Caco-2 (cell line): ENCODE measurements at regions of chr5 and their contacts with region 1.

Region 1: GRCh38 chr5:135332519-135333150 is 66.4 kb downstream of the MACROH2A1 start:
- DNase-seq: peak in 1 of 2 experiments; percentile 71
- H3K4me3 ChIP-seq: no peak overlapping the region
- H3K4me3 Mint-ChIP-seq: no peak overlapping the region
- H3K27ac Mint-ChIP-seq: no peak overlapping the region
- H3K4me1 ChIP-seq: peaks cover 23% of the 10 kb centered on the region
- H3K4me1 Mint-ChIP-seq: peaks cover 22% of the 10 kb centered on the region
- H3K27me3 ChIP-seq: no peaks in the 10 kb centered on the region
- H3K27me3 Mint-ChIP-seq: no peaks in the 10 kb centered on the region
- CTCF ChIP-seq: peak; percentile 60 to 63

Region 2: DNA sequence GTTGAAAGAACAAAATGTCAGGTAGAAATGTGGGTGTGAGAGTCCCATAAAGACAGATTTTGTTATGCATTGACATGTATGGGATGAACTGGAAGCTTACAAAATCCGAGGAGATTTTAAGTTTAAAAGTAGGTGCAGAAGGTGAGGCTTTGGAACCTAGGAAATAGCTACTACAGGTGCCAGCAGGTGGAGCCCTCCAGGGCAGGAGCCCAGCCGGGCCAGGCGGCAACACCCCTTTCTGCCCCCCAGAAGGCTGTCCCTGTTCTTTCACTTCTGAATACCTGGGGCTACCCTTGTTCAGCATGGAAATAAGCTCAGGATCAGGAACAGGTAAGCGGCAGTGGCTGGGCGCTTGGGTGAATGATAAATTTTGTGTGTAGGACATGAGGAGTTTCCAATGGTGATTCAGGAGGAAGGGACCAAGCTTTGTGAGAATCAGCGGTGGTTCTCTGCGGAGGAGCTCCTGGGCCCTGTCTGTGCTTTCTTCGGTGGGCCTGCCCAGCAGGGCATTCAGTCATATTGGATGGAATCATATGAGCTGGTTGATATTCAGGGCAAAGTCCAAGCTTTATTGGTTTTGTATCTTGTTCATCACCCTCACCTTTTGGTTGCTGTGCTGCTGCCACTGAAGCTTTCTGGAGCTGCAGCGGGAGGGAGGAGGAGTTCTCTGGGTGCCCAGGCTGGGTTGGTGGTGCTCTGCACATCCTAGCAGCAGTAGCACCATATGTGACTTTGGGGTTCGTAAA is 415.4 kb before region 1 on chr5:
- CTCF ChIA-PET with region 1: no interaction called
- POLR2A ChIA-PET with region 1: no interaction called
- intact Hi-C with region 1: loop called (anchors 2 kb)
- DNase-seq: peak in 1 of 2 experiments; percentile 44
- H3K4me3 ChIP-seq: no peak overlapping the region
- H3K4me3 Mint-ChIP-seq: no peak overlapping the region
- H3K27ac Mint-ChIP-seq: no peak overlapping the region
- H3K4me1 ChIP-seq: no peaks in the 10 kb centered on the region
- H3K4me1 Mint-ChIP-seq: peaks cover 11% of the 10 kb centered on the region
- H3K27me3 ChIP-seq: no peaks in the 10 kb centered on the region
- H3K27me3 Mint-ChIP-seq: no peaks in the 10 kb centered on the region
- CTCF ChIP-seq: peak; percentile 38 to 72

Region 3: DNA sequence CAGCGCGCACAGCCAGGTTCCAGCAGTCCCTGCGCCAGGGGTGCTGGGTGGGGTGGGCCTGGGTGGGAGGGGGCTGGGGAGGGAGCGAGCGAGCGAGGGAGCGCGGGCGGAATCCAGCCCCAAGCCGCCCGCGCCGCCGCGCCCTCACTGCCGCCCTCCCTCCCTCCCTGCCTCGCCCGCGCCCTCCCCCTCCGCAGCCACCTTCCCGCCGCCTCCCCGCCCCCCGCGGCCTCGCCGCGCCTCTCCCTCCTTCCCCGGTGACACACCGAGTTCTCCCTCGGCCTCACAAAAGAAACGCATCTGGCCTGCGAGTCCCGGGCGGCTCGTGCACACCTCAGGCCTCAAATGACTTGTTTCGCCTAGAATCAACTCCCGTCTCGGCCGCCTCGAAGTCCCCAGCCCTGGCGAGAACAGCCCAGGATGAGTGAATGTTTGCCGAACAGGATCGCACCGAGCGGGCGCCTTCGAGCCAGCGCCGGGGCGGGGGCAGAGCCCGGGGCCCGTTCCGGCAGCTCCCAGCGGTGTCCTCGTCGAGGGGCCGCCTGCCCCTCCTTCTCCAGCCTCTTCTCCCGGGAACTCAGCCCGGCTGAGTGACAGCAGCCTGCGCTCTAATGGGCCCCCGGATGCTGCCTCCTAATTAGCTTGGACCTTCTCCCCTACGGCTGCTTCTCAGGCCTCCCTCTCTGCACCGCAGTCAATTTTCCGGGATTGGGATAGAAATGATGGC is 298.2 kb before region 1 on chr5:
- CTCF ChIA-PET with region 1: no interaction called
- POLR2A ChIA-PET with region 1: no interaction called
- intact Hi-C with region 1: loop called (anchors 5 kb)
- DNase-seq: peak; percentile 88 to 89
- H3K4me3 ChIP-seq: peak overlapping the region; percentile 83
- H3K4me3 Mint-ChIP-seq: peak overlapping the region; percentile 89
- H3K27ac Mint-ChIP-seq: peak overlapping the region; percentile 81
- H3K4me1 ChIP-seq: peaks cover 27% of the 10 kb centered on the region
- H3K4me1 Mint-ChIP-seq: peaks cover 31% of the 10 kb centered on the region
- H3K27me3 ChIP-seq: no peaks in the 10 kb centered on the region
- H3K27me3 Mint-ChIP-seq: no peaks in the 10 kb centered on the region
- CTCF ChIP-seq: no peak

Region 4: GRCh38 chr5:135203593-135204036 is 129.0 kb before region 1 on chr5:
- CTCF ChIA-PET with region 1: no interaction called
- POLR2A ChIA-PET with region 1: no interaction called
- intact Hi-C with region 1: loop called (anchors 1 kb)
- DNase-seq: no peak
- H3K4me3 ChIP-seq: no peak overlapping the region
- H3K4me3 Mint-ChIP-seq: no peak overlapping the region
- H3K27ac Mint-ChIP-seq: no peak overlapping the region
- H3K4me1 ChIP-seq: no peaks in the 10 kb centered on the region
- H3K4me1 Mint-ChIP-seq: no peaks in the 10 kb centered on the region
- H3K27me3 ChIP-seq: no peaks in the 10 kb centered on the region
- H3K27me3 Mint-ChIP-seq: no peaks in the 10 kb centered on the region
- CTCF ChIP-seq: peak; percentile 28 to 29

Region 5: DNA sequence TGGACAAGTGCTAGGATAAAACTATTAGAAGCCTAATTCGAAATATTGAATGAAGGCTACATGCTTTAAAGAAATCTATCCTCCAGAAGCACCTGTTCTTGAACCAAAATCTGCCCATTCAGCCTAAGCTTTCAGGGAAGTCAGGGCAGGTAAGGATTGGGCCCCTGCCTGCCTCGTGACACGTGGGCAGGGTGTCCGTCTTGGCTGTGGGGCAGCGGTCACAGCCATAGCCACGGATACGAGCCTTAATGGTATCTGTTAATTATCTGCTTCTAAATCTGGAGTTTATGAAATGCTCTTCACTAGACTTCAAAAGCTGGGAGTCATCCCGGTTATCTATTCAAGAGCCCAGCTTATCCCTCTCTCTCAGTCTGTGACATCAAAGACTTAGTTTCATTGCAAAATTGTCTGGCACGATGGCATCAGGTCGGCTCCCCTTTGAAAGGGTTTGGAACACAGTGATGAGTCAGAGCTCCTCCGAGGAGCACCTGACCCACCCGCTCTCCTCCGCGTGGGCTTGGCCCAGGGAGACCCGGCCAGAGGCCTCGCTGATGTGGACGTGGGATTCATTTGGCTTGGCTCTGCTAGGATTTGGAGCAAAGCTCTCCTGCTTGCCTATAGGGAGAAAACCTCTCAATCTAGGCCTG is 69.5 kb before region 1 on chr5:
- CTCF ChIA-PET with region 1: no interaction called
- POLR2A ChIA-PET with region 1: no interaction called
- intact Hi-C with region 1: loop called (anchors 2 kb)
- DNase-seq: peak; percentile 87 to 90
- H3K4me3 ChIP-seq: no peak overlapping the region
- H3K4me3 Mint-ChIP-seq: peak overlapping the region; percentile 46
- H3K27ac Mint-ChIP-seq: peak overlapping the region; percentile 56
- H3K4me1 ChIP-seq: peaks cover 36% of the 10 kb centered on the region
- H3K4me1 Mint-ChIP-seq: peaks cover 28% of the 10 kb centered on the region
- H3K27me3 ChIP-seq: no peaks in the 10 kb centered on the region
- H3K27me3 Mint-ChIP-seq: no peaks in the 10 kb centered on the region
- CTCF ChIP-seq: no peak

Region 6: GRCh38 chr5:135313946-135314345 is 18.7 kb before region 1 on chr5:
- CTCF ChIA-PET with region 1: no interaction called
- POLR2A ChIA-PET with region 1: no interaction called
- intact Hi-C with region 1: no loop called
- DNase-seq: no peak
- H3K4me3 ChIP-seq: no peak overlapping the region
- H3K4me3 Mint-ChIP-seq: no peak overlapping the region
- H3K27ac Mint-ChIP-seq: no peak overlapping the region
- H3K4me1 ChIP-seq: peaks cover 27% of the 10 kb centered on the region
- H3K4me1 Mint-ChIP-seq: peaks cover 32% of the 10 kb centered on the region
- H3K27me3 ChIP-seq: no peaks in the 10 kb centered on the region
- H3K27me3 Mint-ChIP-seq: no peaks in the 10 kb centered on the region
- CTCF ChIP-seq: no peak